IMR-90 (cell line): ENCODE measurements at regions of chr12 and their contacts with region 1.

Region 1: DNA sequence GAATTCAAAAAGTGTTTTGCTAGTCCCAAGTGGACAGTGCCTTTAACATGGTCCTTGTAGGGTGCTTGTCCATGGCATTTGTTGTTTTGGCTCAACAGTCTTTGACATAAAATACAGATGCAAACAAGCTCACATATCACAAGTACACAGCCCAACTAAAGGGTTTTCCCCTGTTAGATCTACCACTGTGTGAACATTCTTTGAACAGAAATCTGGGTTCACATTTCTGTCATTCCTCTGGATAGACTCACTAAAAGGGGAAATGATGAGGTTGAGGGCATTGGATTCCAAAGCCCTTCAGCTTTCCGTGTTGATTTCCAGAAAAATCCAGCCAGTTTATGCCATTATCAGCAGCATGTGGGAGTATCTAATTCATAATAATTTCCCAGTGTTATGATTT is 54.1 kb downstream of the EP400 start:
- DNase-seq: peak; percentile 73
- ATAC-seq: peak; percentile 95
- H3K4me3 ChIP-seq: no peak overlapping the region
- H3K27ac ChIP-seq: peak overlapping the region; percentile 69; the same call in 1 of the 2 replicates
- H3K4me1 ChIP-seq: peaks cover 5% of the 10 kb centered on the region
- H3K27me3 ChIP-seq: no peaks in the 10 kb centered on the region
- CTCF ChIP-seq: no peak
- POLR2A ChIP-seq: no peak
- RAD21 ChIP-seq: no peak

Region 2: GRCh38 chr12:131850856-131851559 is 152.8 kb before region 1 on chr12:
- CTCF ChIA-PET with region 1: no interaction called
- POLR2A ChIA-PET with region 1: no interaction called
- dilution Hi-C with region 1: no loop called
- in situ Hi-C with region 1: no loop called
- intact Hi-C with region 1: loop called (anchors 2 kb)
- DNase-seq: no peak
- ATAC-seq: peak; percentile 79
- H3K4me3 ChIP-seq: no peak overlapping the region
- H3K27ac ChIP-seq: no peak overlapping the region
- H3K4me1 ChIP-seq: peaks cover 6% of the 10 kb centered on the region
- H3K27me3 ChIP-seq: peaks cover 8% of the 10 kb centered on the region; the same call in 1 of the 2 replicates
- CTCF ChIP-seq: peak; percentile 56
- POLR2A ChIP-seq: no peak
- RAD21 ChIP-seq: peak; percentile 78